Dorsolateral prefrontal cortex (tissue), 120 donors: ENCODE measurements at regions of chr3 and their contacts with region 1.

Region 1: GRCh38 chr3:173553635-173554280 is 156.2 kb downstream of the NLGN1 start:
- DNase-seq: peak in 1 of 10 donors; percentile 29
- H3K4me3 ChIP-seq: no peak overlapping the region
- H3K27ac ChIP-seq: no peak overlapping the region
- H3K27me3 ChIP-seq: no peaks in the 10 kb centered on the region
- CTCF ChIP-seq: peak; percentile 58 to 92 (median 78)

Region 2: GRCh38 chr3:172982736-172983364 is 570.9 kb before region 1 on chr3:
- intact Hi-C with region 1: loop called in 1 of 2 experiments (anchors 10 kb)
- DNase-seq: no peak
- H3K4me3 ChIP-seq: peak overlapping the region in 4 of 59 donors; percentile 3 to 21 (median 9)
- H3K27ac ChIP-seq: no peak overlapping the region
- H3K27me3 ChIP-seq: no peaks in the 10 kb centered on the region
- CTCF ChIP-seq: peak in 55 of 56 donors; percentile 15 to 68 (median 51)

Region 3: GRCh38 chr3:173371848-173372487 is 181.8 kb before region 1 on chr3:
- intact Hi-C with region 1: loop called in 1 of 2 experiments (anchors 5 kb)
- DNase-seq: peak in 4 of 10 donors; percentile 11 to 47 (median 38)
- H3K4me3 ChIP-seq: no peak overlapping the region
- H3K27ac ChIP-seq: no peak overlapping the region
- H3K27me3 ChIP-seq: no peaks in the 10 kb centered on the region
- CTCF ChIP-seq: peak; percentile 35 to 87 (median 74)

Region 4: DNA sequence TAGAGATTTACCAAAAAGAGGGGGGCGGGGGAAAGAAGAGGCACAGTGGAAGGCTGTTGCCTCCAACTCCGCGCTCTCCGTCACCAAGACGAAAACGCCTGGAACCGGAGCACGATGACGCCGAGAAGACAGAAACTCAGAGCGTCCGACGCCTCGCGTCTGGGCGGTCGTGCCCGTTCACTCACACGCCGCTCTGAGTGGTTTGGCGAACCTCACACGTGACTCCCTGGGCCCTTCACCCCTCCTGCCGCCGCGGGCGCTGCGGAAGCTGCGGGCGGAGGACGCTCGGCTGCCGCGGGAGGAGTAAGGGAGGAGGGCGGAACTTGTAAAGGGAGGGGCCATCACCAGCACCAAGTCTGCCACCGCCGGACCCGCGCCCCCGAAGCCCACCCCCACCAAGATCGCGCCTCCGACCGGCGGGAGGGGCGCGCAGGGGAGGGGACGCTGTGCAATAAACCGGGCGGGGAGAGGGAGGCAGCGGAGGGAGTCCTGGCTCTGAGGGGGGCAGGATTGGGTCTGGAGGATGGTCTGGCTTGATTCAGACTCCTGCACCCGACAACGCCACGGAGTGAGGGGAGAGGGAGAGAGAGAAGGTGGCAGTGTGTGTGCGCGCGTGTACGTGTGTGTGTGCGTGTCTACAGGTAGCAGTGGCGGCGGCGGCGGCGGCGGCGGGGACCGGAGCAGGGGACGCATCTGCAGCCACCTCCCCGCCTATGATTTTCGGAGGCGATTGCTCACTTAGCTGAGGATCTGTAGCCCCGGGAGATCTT is 158.2 kb before region 1 on chr3:
- intact Hi-C with region 1: loop called in 1 of 2 experiments (anchors 5 kb)
- DNase-seq: peak; percentile 75 to 95 (median 91)
- H3K4me3 ChIP-seq: peak overlapping the region; percentile 51 to 90 (median 76)
- H3K27ac ChIP-seq: peak overlapping the region; percentile 78 to 98 (median 91)
- H3K27me3 ChIP-seq: no peaks in the 10 kb centered on the region
- CTCF ChIP-seq: peak in 30 of 56 donors; percentile 8 to 51 (median 28)

Region 5: DNA sequence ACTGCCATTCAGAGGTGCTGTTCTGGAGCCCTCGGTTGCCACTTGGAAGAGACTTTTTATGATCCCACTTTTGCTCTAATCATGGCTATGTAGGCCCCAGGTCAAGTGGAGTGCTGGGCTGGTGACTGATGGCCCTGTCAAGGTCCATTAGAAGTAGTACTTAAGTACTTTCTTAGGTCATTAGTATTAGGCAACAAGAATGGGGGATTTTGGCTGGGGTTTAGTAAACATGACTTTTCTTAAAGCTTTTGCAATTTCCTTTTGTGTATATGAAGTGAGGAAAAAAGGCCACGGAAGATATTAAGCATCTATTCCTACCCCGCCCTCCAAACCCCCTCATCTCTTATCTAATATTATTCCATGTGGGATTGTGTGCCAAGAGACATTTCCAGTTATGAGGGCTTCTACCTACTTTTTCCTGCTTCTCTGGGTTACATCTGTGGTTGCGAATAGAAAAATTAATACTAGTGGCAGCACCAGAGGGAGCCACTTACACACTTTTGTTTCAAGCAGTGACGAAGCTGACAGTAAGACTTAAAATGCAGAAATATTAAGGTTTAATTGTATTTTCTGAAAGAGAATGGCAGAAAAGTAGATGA is 142.3 kb before region 1 on chr3:
- intact Hi-C with region 1: loop called (anchors 2 kb)
- DNase-seq: peak in 3 of 10 donors; percentile 15 to 39 (median 34)
- H3K4me3 ChIP-seq: peak overlapping the region in 45 of 59 donors; percentile 1 to 60 (median 29)
- H3K27ac ChIP-seq: peak overlapping the region in 57 of 59 donors; percentile 7 to 88 (median 72)
- H3K27me3 ChIP-seq: no peaks in the 10 kb centered on the region
- CTCF ChIP-seq: peak; percentile 46 to 83 (median 69)

Region 6: DNA sequence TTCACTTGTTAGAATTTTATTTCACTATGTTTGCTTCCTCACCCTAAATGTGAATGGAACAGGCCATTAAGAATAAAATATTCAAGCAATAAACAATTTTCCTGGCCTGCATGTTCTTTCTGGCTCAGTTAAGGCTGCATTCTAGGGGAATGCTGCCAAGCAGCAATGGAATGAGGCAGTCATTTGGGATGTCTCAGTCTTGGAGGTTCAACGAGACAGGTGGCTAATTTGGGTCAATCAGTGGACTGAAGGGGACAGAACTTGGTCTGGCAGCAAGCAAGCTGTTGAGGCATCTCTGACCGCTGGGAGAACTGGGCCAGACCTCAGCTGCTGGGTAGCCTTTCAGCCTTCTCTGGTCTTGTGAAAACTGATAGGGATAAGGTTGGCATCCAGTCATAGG is 85.3 kb after region 1 on chr3:
- intact Hi-C with region 1: no loop called
- DNase-seq: peak in 1 of 10 donors; percentile 75
- H3K4me3 ChIP-seq: no peak overlapping the region
- H3K27ac ChIP-seq: no peak overlapping the region
- H3K27me3 ChIP-seq: no peaks in the 10 kb centered on the region
- CTCF ChIP-seq: no peak